Activated B cell treated with CpG ODN at 0.5 μM for 24 hours (primary cell): ENCODE measurements at regions of chr10 and their contacts with region 1.

Region 1: DNA sequence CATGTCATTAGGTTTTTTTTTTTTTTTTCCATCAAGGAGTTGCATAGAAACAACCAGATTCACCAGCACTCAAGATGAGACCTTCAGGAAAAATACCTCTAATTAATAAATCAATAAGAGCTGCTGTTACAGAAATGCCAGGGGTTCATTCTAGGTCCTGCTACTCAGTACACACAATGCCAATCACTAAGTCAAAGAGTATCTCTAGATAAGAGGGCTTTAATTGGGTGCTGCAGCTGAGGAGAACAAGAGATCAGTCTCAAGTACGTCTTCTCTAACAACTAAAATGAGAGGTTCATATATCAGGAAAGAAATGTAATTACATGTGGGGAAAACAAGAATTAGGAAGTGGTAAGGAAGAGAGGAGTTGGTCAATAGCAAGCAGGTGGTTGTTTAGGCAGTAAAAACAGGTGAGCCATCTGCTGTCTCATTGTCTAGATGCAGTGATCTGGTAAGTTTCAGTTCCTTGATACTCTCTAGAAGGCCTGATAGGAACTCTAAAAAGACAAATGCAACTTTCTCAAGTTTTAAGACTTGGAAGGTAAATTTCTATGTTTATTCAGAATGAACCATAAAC is 272.9 kb upstream of the ZWINT start:
- DNase-seq: no peak
- ATAC-seq: peak; percentile 88
- H3K4me3 Mint-ChIP-seq: peak overlapping the region; percentile 4
- H3K27ac Mint-ChIP-seq: peak overlapping the region; percentile 68
- H3K4me1 Mint-ChIP-seq: peaks cover 22% of the 10 kb centered on the region
- H3K27me3 Mint-ChIP-seq: no peaks in the 10 kb centered on the region
- CTCF ChIP-seq: no peak

Region 2: GRCh38 chr10:56360967-56361612 is 272.9 kb before region 1 on chr10 and contains the start of gene ZWINT:
- CTCF ChIA-PET with region 1: no interaction called
- POLR2A ChIA-PET with region 1: no interaction called
- intact Hi-C with region 1: loop called (anchors 10 kb)
- DNase-seq: peak; percentile 86
- ATAC-seq: peak; percentile 98
- H3K4me3 Mint-ChIP-seq: peak within 1 kb of the TSS; percentile 95
- H3K27ac Mint-ChIP-seq: peak within 1 kb of the TSS; percentile 37
- H3K4me1 Mint-ChIP-seq: peaks cover 15% of the 10 kb centered on the region
- H3K27me3 Mint-ChIP-seq: no peaks in the 10 kb centered on the region
- CTCF ChIP-seq: no peak
- total RNA-seq, gene ZWINT: 5.0 and 6.6 TPM in 2 replicates

Region 3: GRCh38 chr10:56606202-56606601 is 27.8 kb before region 1 on chr10:
- CTCF ChIA-PET with region 1: no interaction called
- POLR2A ChIA-PET with region 1: no interaction called
- intact Hi-C with region 1: no loop called
- DNase-seq: no peak
- ATAC-seq: no peak
- H3K4me3 Mint-ChIP-seq: no peak overlapping the region
- H3K27ac Mint-ChIP-seq: no peak overlapping the region
- H3K4me1 Mint-ChIP-seq: no peaks in the 10 kb centered on the region
- H3K27me3 Mint-ChIP-seq: peaks cover 1% of the 10 kb centered on the region
- CTCF ChIP-seq: no peak